ENCODE measurements at regions of chr20 and their contacts with region 1.

Region 1: GRCh38 chr20:45436732-45437391 is 20.9 kb downstream of the PIGT start:
- DNase-seq: peak; percentile 84
- H3K4me3 ChIP-seq: peak overlapping the region; percentile 51
- H3K27ac ChIP-seq: no peak overlapping the region
- H3K4me1 ChIP-seq: peaks cover 42% of the 10 kb centered on the region
- CTCF ChIP-seq: peak; percentile 94

Region 2: DNA sequence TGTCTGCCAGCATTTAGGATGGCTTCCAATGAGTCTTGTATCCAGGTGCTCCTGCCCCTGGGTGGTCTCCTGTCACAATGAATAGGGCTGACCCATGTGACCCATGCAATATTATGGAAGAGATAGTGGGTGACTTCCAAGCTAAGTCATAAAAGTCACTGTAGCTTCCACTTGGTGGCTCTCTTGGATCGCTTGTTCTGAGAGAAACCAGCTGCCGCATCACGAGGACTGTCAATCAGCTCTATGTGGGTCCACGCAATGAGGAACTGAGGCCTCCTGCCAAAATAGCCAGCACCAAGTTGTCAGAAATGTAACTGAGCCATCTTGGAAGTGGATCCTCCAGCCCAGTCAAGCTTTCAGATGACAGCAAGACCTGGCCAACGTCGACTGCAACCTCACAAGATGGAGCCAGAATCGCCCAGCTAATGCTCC is 113.9 kb before region 1 on chr20:
- CTCF ChIA-PET with region 1: interaction called, 3 read pairs
- POLR2A ChIA-PET with region 1: no interaction called
- intact Hi-C with region 1: loop called (anchors 2 kb)
- DNase-seq: peak; percentile 75
- H3K4me3 ChIP-seq: no peak overlapping the region
- H3K27ac ChIP-seq: no peak overlapping the region
- H3K4me1 ChIP-seq: peaks cover 68% of the 10 kb centered on the region
- CTCF ChIP-seq: peak; percentile 74

Region 3: DNA sequence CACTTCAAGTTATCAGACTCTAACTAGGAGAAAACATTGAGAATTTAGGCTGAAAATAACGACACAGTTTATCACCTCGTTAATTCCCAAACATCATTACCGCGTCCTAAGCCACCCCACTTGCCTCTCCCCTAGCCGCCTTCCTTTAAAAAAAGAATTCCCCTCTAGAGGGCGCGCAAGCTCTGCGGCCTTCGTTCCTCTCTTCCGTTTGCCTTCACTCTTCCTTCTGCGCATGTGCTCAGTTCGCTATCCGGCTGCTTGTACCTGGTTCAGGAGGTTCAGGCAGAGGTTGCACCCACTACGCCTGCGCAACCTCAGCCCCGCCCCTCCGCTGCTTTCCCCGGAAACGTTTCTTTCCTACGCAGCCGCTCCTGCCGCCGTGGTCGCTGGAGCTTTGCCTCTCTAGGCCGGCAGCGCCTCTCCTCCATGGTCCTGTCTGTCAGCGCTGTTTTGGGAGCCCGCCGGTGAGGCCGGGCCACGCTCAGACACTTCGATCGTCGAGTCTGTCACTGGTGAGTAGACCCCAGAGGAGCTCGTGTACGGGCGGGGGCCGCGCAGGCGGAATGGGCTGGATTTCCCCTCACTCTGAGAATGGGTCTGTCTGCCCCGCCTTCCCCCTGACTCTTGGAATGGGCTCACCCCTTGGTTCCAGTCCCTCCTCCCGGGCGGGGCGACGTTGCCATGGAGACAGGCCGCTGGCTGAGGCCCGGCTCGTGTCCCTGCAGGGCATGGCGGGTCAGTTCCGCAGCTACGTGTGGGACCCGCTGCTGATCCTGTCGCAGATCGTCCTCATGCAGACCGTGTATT is 73.9 kb before region 1 on chr20 and contains the start of gene SYS1:
- CTCF ChIA-PET with region 1: interaction called, 14 read pairs
- POLR2A ChIA-PET with region 1: interaction called, 6 read pairs
- intact Hi-C with region 1: loop called (anchors 1 kb)
- DNase-seq: peak; percentile 98
- H3K4me3 ChIP-seq: peak within 1 kb of the TSS; percentile 76
- H3K27ac ChIP-seq: peak within 1 kb of the TSS; percentile 54
- H3K4me1 ChIP-seq: peaks cover 43% of the 10 kb centered on the region
- CTCF ChIP-seq: peak; percentile 89
- total RNA-seq, gene SYS1: 22.3 and 37.6 TPM in 2 replicates

Region 4: GRCh38 chr20:45368221-45368980 is 68.5 kb before region 1 on chr20:
- CTCF ChIA-PET with region 1: interaction called, 14 read pairs
- POLR2A ChIA-PET with region 1: no interaction called
- intact Hi-C with region 1: loop called (anchors 1 kb)
- DNase-seq: peak; percentile 97
- H3K4me3 ChIP-seq: peak overlapping the region; percentile 50
- H3K27ac ChIP-seq: peak overlapping the region; percentile 83
- H3K4me1 ChIP-seq: peaks cover 74% of the 10 kb centered on the region
- CTCF ChIP-seq: no peak

Region 5: DNA sequence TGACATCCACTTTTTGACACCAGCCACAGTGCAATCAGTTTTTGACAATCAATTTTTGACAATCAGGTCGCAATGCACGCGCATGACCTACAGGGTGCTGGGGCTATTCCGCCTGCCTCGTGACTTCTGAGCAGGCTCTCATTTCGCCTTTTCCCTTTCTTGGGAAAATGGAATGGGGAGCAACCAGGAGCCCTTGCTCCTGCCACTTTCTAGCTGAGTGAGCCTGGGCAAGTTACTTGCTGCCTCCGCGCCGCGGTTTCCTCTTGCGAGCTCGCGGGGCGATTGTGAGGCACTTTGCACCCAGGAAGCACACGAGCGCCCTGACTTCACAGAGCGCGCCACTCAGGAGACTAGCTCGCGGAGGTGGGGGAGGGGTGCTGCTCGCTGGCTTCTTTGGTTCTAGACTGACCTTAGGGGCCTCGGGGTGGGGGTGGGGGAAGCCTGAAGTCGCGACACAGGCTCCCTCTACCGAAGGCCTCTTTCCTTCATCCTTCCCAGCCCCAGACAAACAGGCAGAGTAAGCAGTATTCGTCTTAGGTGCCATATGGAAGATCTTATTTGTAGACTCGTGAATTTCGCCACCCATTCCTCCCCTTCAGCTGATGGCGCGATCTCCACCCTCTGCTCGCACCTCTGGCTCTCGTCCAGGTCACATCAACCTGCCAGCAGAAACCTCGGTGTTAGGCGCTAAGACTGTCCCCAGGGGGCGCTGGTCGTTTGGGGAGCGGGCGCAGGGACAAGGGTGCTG is 63.3 kb before region 1 on chr20:
- CTCF ChIA-PET with region 1: interaction called, 8 read pairs
- POLR2A ChIA-PET with region 1: interaction called, 4 read pairs
- intact Hi-C with region 1: loop called (anchors 1 kb)
- DNase-seq: peak; percentile 83
- H3K4me3 ChIP-seq: no peak overlapping the region
- H3K27ac ChIP-seq: no peak overlapping the region
- H3K4me1 ChIP-seq: peaks cover 38% of the 10 kb centered on the region
- CTCF ChIP-seq: peak; percentile 92

Region 6: GRCh38 chr20:45415774-45416637 is 20.9 kb before region 1 on chr20 and contains the start of gene PIGT:
- CTCF ChIA-PET with region 1: interaction called, 7 read pairs
- POLR2A ChIA-PET with region 1: interaction called, 4 read pairs
- intact Hi-C with region 1: loop called (anchors 1 kb)
- DNase-seq: peak; percentile 91
- H3K4me3 ChIP-seq: peak within 1 kb of the TSS; percentile 98
- H3K27ac ChIP-seq: peak within 1 kb of the TSS; percentile 84
- H3K4me1 ChIP-seq: peaks cover 55% of the 10 kb centered on the region
- CTCF ChIP-seq: no peak
- total RNA-seq, gene PIGT: 75.7 and 104 TPM in 2 replicates

Measured in OCI-LY7 (cell line).